PC-3 (cell line): ENCODE measurements at regions of chr13 and their contacts with region 1.

Region 1: GRCh38 chr13:101640788-101641400 is 188.4 kb downstream of the ITGBL1 start:
- DNase-seq: peak; percentile 95
- ATAC-seq: peak; percentile 82
- H3K4me3 ChIP-seq: peak overlapping the region; percentile 23
- H3K27ac ChIP-seq: peak overlapping the region; percentile 44
- H3K4me1 ChIP-seq: peaks cover 40% of the 10 kb centered on the region
- H3K27me3 ChIP-seq: no peaks in the 10 kb centered on the region
- CTCF ChIP-seq: no peak

Region 2: DNA sequence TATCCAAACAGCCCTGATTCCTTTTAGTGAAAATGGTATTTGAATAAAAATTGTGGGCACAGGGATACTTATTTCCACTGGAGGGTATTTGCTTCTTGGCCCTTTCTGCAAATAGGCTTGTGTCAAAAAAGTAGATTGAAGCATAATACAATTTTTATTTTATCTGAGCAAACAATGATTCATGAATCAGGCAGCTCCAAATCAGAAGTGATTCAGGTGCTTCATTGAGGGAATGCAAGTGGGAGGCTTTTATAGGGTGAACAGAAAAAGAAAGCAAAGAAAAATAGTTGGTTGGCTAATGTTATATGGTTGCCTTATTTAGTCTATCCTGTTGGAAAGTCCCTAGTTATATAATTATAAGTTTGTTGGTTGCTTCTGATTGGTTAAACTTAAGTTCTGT is 70.5 kb before region 1 on chr13:
- CTCF ChIA-PET with region 1: no interaction called
- POLR2A ChIA-PET with region 1: no interaction called
- intact Hi-C with region 1: loop called (anchors 2 kb)
- DNase-seq: peak; percentile 86
- ATAC-seq: peak; percentile 92
- H3K4me3 ChIP-seq: peak overlapping the region; percentile 10; the same call in 1 of the 2 replicates
- H3K27ac ChIP-seq: peak overlapping the region; percentile 85
- H3K4me1 ChIP-seq: peaks cover 40% of the 10 kb centered on the region
- H3K27me3 ChIP-seq: no peaks in the 10 kb centered on the region
- CTCF ChIP-seq: no peak

Region 3: GRCh38 chr13:101829484-101829883 is 188.6 kb after region 1 on chr13:
- CTCF ChIA-PET with region 1: no interaction called
- POLR2A ChIA-PET with region 1: no interaction called
- intact Hi-C with region 1: no loop called
- DNase-seq: no peak
- ATAC-seq: no peak
- H3K4me3 ChIP-seq: no peak overlapping the region
- H3K27ac ChIP-seq: no peak overlapping the region
- H3K4me1 ChIP-seq: no peaks in the 10 kb centered on the region
- H3K27me3 ChIP-seq: peaks cover 71% of the 10 kb centered on the region
- CTCF ChIP-seq: no peak